ENCODE measurements at regions of chr2 and their contacts with region 1.

Region 1: DNA sequence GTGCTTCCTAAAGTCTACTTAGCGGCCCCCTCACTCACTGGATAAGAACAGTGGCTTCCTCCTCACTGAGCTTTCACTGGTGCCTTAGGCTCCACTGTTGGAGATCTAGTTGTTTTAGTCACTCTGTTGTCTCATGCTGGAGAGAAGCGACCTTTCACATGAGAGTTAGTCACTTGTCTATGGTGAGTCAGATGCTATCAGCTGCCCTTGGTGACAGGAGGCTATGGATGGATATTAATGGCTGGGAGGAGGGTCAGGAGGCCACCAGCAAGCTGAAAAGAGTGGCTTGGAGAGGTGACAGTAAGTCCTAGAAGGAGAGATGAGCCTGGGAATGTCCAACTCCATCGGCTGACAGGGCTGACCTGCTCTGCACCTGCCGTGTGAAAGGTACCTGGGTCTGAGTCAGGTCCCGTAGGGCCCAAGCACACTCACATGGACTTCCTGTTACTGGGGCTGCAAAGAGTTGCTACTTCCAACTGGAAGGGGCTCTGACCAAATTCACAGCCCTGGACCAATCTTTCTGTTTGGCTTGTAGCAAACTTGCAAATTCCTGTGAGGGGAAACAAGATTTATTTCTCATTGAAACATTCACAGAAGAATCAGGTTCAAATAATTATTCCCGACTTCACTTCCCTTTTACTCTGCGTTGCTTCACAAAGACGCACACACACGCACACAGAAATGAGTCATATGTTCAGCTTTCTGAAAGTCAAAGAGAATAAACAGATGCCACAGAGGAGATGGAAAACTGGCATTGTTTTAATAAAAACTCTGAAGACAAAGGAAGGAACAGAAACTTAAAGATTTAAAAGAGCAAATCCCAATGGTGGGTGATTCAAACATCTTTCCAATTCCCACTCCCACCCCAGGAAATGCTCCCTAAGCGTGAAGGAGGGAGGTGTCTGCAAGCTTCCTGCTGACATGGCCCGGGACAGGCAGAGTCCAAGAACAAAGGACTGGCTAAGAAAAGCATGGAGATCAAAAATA is 203.5 kb upstream of the TWIST2 start:
- DNase-seq: peak; percentile 91
- ATAC-seq: peak; percentile 90
- H3K4me3 ChIP-seq: no peak overlapping the region
- H3K27ac ChIP-seq: 0 out of 2 replicates have a peak overlapping the region, but pooled peaks have one; percentile 18
- H3K4me1 ChIP-seq: peaks cover 3% of the 10 kb centered on the region
- H3K27me3 ChIP-seq: no peaks in the 10 kb centered on the region
- CTCF ChIP-seq: no peak

Region 2: DNA sequence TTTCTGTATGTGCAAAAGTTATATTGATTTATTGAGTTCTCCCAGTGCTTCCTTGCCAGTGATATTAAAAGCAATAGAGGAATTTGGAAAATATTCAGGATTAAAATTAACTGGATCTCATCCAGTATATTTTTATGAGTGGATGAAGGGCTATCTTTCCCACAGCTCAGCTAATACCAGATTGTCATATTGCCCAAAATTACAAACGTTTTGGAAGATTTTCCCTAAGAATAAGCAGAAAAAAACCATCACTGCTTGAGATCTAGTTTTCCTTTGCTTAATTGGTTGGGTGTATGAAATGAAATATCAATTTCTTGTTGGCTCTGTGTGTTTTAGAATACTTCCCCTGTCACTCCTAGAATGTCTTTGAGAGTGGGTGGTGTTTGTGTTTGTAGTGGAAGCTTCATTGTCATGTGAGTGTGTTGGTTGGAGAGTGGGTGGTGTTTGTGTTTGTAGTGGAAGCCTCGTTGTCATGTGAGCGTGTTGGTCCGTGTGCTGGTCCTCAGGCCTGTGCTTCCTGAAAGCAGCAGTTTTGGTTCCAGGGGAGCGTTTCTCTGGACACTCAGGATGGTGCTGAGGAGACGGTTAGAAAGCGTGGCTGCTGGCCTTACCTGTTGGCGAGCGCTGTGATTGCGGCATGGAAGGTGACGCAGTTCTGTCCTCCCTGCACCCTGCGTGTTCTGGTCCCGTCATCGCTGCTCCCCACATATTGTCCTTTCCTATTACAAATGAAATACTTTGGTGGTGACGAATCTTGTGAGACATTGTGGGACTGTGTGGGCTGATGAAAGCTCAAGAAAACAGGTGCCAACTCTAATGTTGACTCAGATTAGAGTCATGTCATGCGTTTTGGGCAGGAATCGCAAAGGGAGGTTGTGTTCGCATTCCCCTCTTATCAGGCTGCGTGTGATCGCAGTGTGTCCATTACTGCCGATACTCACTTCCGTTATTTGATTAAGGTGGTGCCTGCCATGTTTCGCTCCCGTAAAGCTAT is 205.2 kb before region 1 on chr2:
- CTCF ChIA-PET with region 1: no interaction called
- POLR2A ChIA-PET with region 1: interaction called, 19 read pairs
- in situ Hi-C with region 1: no loop called
- intact Hi-C with region 1: no loop called
- DNase-seq: peak; percentile 99
- ATAC-seq: peak; percentile 90
- H3K4me3 ChIP-seq: peak overlapping the region; percentile 19 to 41
- H3K27ac ChIP-seq: peak overlapping the region; percentile 97
- H3K4me1 ChIP-seq: peaks cover 56% of the 10 kb centered on the region
- H3K27me3 ChIP-seq: no peaks in the 10 kb centered on the region
- CTCF ChIP-seq: no peak

Region 3: GRCh38 chr2:238657132-238658053 is 13.0 kb after region 1 on chr2:
- CTCF ChIA-PET with region 1: interaction called, 12 read pairs
- POLR2A ChIA-PET with region 1: interaction called, 7 read pairs
- in situ Hi-C with region 1: no loop called
- intact Hi-C with region 1: no loop called
- DNase-seq: no peak
- ATAC-seq: peak; percentile 30; the same call in 1 of the 2 replicates
- H3K4me3 ChIP-seq: no peak overlapping the region
- H3K27ac ChIP-seq: no peak overlapping the region
- H3K4me1 ChIP-seq: no peaks in the 10 kb centered on the region
- H3K27me3 ChIP-seq: no peaks in the 10 kb centered on the region
- CTCF ChIP-seq: no peak

Region 4: GRCh38 chr2:238688193-238689153 is 44.1 kb after region 1 on chr2:
- CTCF ChIA-PET with region 1: no interaction called
- POLR2A ChIA-PET with region 1: interaction called, 13 read pairs
- in situ Hi-C with region 1: no loop called
- intact Hi-C with region 1: no loop called
- DNase-seq: no peak
- ATAC-seq: no peak
- H3K4me3 ChIP-seq: no peak overlapping the region
- H3K27ac ChIP-seq: no peak overlapping the region
- H3K4me1 ChIP-seq: peaks cover 9% of the 10 kb centered on the region; the same call in 1 of the 2 replicates
- H3K27me3 ChIP-seq: no peaks in the 10 kb centered on the region
- CTCF ChIP-seq: no peak

Region 5: GRCh38 chr2:238821391-238821790 is 177.0 kb after region 1 on chr2:
- CTCF ChIA-PET with region 1: no interaction called
- POLR2A ChIA-PET with region 1: interaction called, 19 read pairs
- in situ Hi-C with region 1: no loop called
- intact Hi-C with region 1: no loop called
- DNase-seq: no peak
- ATAC-seq: no peak
- H3K4me3 ChIP-seq: no peak overlapping the region
- H3K27ac ChIP-seq: no peak overlapping the region
- H3K4me1 ChIP-seq: no peaks in the 10 kb centered on the region
- H3K27me3 ChIP-seq: no peaks in the 10 kb centered on the region
- CTCF ChIP-seq: no peak

Measured in Panc1 (cell line).